GM12878 (cell line): ENCODE measurements at regions of chr9 and their contacts with region 1.

Region 1: GRCh38 chr9:85741875-85742629 is at the start of gene AGTPBP1:
- DNase-seq: peak; percentile 75
- ATAC-seq: peak; percentile 89
- H3K4me3 ChIP-seq: peak within 1 kb of the TSS; percentile 91
- H3K27ac ChIP-seq: peak within 1 kb of the TSS; percentile 77
- H3K4me1 ChIP-seq: no peaks in the 10 kb centered on the region
- H3K27me3 ChIP-seq: no peaks in the 10 kb centered on the region
- CTCF ChIP-seq: no peak
- EP300 ChIP-seq: no peak
- POLR2A ChIP-seq: peak; percentile 67
- RAD21 ChIP-seq: no peak
- polyA plus RNA-seq, gene AGTPBP1: 6.1 to 7.9 TPM

Region 2: DNA sequence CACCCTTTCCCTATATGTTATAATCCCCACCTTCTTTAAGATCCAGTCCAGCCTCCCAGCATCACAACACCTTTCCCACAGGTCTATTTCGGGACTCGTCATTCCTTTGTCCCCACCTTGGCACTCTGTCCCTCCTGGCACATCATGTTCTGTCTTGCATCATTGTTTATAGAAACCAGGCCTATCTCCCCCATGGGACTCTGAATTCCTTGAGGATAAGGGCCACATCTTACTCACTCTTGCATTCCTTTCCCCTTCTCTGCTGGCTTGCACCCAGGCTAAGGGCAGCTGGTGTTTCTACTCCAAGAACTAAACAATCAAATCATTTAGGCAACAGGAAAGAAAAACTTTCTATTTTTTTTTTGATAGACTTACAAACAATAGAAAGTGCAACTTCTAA is 206.0 kb before region 1 on chr9:
- CTCF ChIA-PET with region 1: no interaction called
- POLR2A ChIA-PET with region 1: no interaction called
- RAD21 ChIA-PET with region 1: no interaction called
- SMC1A ChIA-PET with region 1: no interaction called
- in situ Hi-C with region 1: no loop called
- intact Hi-C with region 1: no loop called
- DNase-seq: no peak
- ATAC-seq: no peak
- H3K4me3 ChIP-seq: no peak overlapping the region
- H3K27ac ChIP-seq: no peak overlapping the region
- H3K4me1 ChIP-seq: no peaks in the 10 kb centered on the region
- H3K27me3 ChIP-seq: no peaks in the 10 kb centered on the region
- CTCF ChIP-seq: no peak
- EP300 ChIP-seq: no peak
- POLR2A ChIP-seq: no peak
- RAD21 ChIP-seq: no peak

Region 3: GRCh38 chr9:85603936-85604335 is 138.1 kb before region 1 on chr9:
- CTCF ChIA-PET with region 1: no interaction called
- POLR2A ChIA-PET with region 1: no interaction called
- RAD21 ChIA-PET with region 1: no interaction called
- SMC1A ChIA-PET with region 1: no interaction called
- in situ Hi-C with region 1: no loop called
- intact Hi-C with region 1: no loop called
- DNase-seq: no peak
- ATAC-seq: no peak
- H3K4me3 ChIP-seq: no peak overlapping the region
- H3K27ac ChIP-seq: no peak overlapping the region
- H3K4me1 ChIP-seq: no peaks in the 10 kb centered on the region
- H3K27me3 ChIP-seq: no peaks in the 10 kb centered on the region
- CTCF ChIP-seq: no peak
- EP300 ChIP-seq: no peak
- POLR2A ChIP-seq: no peak
- RAD21 ChIP-seq: no peak

Region 4: DNA sequence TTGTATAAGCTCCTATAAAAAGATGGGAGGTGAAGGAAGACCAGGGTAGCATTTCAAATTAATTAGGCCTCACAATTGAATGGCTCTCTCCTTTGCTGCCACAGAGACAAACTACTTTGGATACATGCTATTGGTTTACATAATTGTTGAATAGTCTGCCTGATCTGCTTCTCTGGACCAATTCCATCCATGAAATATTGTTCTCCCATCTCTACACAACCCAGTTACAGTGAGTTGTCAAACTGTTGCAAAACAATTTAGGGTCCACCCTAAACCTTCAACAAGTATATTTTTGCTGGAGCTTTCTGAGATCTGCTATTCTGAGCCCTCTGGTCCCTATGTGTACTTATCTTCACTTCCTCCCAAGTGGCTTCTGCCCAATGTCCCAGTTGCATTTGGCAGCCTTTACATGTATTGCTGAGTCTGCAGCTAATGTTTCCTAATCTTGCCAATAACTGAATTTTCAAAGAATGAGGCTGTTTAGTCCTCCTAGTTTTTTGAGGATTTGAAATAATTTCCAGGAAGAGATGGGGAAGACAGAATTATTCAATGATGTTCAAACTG is 39.2 kb before region 1 on chr9:
- CTCF ChIA-PET with region 1: interaction called, 7 read pairs
- POLR2A ChIA-PET with region 1: interaction called, 5 read pairs
- RAD21 ChIA-PET with region 1: interaction called, 3 read pairs
- SMC1A ChIA-PET with region 1: interaction called, 8 read pairs
- in situ Hi-C with region 1: no loop called
- intact Hi-C with region 1: loop called (anchors 5 kb)
- DNase-seq: no peak
- ATAC-seq: no peak
- H3K4me3 ChIP-seq: no peak overlapping the region
- H3K27ac ChIP-seq: no peak overlapping the region
- H3K4me1 ChIP-seq: no peaks in the 10 kb centered on the region
- H3K27me3 ChIP-seq: no peaks in the 10 kb centered on the region
- CTCF ChIP-seq: no peak
- EP300 ChIP-seq: no peak
- POLR2A ChIP-seq: no peak
- RAD21 ChIP-seq: no peak

Region 5: DNA sequence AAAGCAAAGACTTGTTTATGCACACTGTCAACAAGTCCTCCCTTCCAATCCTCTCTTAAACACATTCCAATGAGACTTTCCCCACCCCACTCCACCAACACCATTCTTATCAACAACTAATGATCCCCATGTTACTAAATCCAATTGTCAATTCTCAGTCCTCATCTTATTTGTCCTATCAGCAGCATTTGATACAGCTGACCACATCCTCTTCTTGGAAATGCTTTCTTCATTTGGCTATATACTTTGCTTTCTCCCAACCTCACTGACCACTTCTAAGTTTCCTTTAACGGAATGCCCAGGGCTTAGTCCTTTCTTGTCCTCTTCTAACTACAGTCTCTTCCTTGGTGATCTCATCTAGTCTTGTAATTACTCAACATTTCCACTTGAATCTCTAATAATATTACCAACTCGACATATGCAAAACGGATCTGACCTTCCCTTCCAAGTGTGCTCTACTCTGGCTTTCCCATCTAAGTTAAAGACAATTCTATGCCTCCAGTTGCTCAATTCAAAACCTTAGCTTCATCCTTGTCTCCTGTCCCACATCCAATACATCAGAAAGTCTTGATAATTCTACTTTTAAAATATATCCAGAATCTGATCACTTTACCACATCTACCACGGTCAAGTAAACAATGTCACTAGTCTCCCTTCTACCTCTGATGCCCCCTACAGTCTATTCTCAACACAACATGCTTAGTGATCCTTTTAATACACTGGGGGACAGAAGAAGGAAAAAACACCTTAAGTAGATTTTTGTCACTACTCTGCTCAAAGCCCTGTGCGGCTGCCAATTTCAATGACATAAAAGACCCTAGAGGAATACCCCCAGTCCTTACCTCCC is 25.8 kb before region 1 on chr9:
- CTCF ChIA-PET with region 1: interaction called, 5 read pairs
- POLR2A ChIA-PET with region 1: interaction called, 3 read pairs
- RAD21 ChIA-PET with region 1: no interaction called
- SMC1A ChIA-PET with region 1: interaction called, 17 read pairs
- in situ Hi-C with region 1: no loop called
- intact Hi-C with region 1: no loop called
- DNase-seq: peak; percentile 48
- ATAC-seq: peak; percentile 87
- H3K4me3 ChIP-seq: peak overlapping the region; percentile 37; the same call in 1 of the 2 replicates
- H3K27ac ChIP-seq: peak overlapping the region; percentile 49; the same call in 1 of the 2 replicates
- H3K4me1 ChIP-seq: peaks cover 16% of the 10 kb centered on the region
- H3K27me3 ChIP-seq: no peaks in the 10 kb centered on the region
- CTCF ChIP-seq: peak; percentile 29 to 47 (median 46); a peak in 5 of 6 replicates
- EP300 ChIP-seq: peak in 1 of 2 experiments; percentile 19; a peak in 1 of 4 replicates
- POLR2A ChIP-seq: no peak
- RAD21 ChIP-seq: 0 out of 2 replicates have a peak, but pooled peaks have one; percentile 28

Region 6: GRCh38 chr9:85940832-85941621 is 199.0 kb after region 1 on chr9 and contains the start of gene NAA35:
- CTCF ChIA-PET with region 1: no interaction called
- POLR2A ChIA-PET with region 1: interaction called, 3 read pairs
- RAD21 ChIA-PET with region 1: no interaction called
- SMC1A ChIA-PET with region 1: no interaction called
- in situ Hi-C with region 1: no loop called
- intact Hi-C with region 1: loop called (anchors 5 kb)
- DNase-seq: peak; percentile 94
- ATAC-seq: peak; percentile 86
- H3K4me3 ChIP-seq: peak within 1 kb of the TSS; percentile 87
- H3K27ac ChIP-seq: peak within 1 kb of the TSS; percentile 84
- H3K4me1 ChIP-seq: 0 out of 2 replicates have a peak, but pooled peaks cover 4% of the 10 kb centered on the region
- H3K27me3 ChIP-seq: no peaks in the 10 kb centered on the region
- CTCF ChIP-seq: no peak
- EP300 ChIP-seq: peak; percentile 38 to 74; a peak in 1 of 4 replicates
- POLR2A ChIP-seq: peak; percentile 85
- RAD21 ChIP-seq: no peak
- polyA plus RNA-seq, gene NAA35: 18.9 to 23.4 TPM